ENCODE measurements at regions of chr6 and their contacts with region 1.

Region 1: GRCh38 chr6:131116749-131117360 is 18.4 kb upstream of the AKAP7 start:
- DNase-seq: no peak
- ATAC-seq: no peak

Region 2: GRCh38 chr6:130885392-130886192 is 231.3 kb before region 1 on chr6:
- intact Hi-C with region 1: loop called (anchors 2 kb)
- DNase-seq: no peak
- ATAC-seq: peak; percentile 85

Region 3: DNA sequence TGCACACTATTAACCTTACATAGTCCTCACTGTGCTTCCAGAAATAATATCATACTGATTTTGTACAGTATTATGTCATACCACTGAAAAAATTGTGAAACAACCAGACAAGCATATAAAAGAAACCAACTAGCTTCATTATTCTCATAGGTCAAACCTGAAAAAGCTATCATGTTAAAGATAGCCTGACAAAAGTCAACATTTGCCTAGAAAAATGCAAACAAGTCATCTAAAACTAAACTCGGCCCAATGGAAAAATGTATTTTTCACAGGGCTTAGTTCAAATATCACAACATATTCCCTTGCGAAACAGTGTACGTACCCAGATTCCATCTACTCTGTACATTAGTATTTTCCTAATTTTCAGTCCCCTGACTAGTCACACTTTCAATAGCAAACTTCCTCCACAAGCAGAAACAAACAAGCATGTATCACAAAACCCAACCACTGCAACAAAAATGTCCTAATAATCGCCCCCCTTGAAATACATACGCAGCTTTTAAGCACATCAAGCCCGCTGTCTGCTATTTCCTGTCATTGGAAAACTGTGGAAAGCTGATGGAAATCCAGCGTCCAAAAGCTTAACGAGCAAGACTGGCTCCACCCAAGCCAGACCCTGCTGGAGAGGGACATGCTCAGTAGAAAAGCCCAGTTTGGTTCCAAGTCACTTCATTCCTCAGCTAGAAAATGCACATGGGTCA is 146.9 kb before region 1 on chr6:
- intact Hi-C with region 1: loop called (anchors 10 kb)
- DNase-seq: no peak
- ATAC-seq: peak; percentile 88

Region 4: DNA sequence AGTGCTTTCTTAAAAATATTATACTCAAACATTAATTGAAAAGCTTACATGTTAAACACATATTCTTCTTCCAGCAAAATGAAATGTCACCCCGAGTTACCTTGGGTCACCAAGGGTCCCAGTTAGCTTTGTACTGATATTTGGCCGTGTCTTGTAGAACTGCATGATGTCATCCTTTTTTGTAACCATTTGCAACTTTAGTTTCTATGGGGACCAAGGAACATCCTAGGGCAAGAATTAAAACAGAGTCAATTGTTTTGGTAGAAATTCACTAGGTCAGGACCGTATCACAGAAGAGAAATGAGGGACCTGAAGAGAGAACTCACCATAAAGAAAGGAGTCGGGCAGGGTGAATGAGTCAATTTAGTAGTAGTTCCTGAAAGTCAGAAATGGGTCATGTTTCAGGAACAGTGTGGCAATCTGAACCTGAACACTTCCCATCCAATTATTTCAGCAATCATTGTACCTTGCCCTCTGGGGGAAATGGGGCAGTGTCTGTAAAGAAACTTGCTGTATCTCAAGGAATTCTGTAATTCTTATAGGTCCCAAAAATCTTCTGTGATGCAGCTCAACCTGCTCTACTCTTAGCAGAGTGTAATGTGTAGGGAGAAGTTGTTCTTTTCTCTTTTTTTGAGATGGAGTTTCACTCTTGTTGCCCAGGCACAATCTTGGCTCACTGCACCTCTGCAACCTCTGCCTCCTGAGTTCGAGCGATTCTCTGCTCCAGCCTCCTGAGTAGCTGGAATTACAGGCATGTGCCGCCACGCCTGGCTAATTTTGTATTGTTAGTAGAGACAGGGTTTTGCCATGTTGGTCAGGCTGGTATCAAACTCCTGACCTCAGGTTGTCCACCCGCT is 13.1 kb after region 1 on chr6:
- intact Hi-C with region 1: no loop called
- DNase-seq: no peak
- ATAC-seq: no peak